ENCODE measurements at regions of chr4 and their contacts with region 1.

Region 1: GRCh38 chr4:16598243-16599206 is 299.9 kb downstream of the LDB2 start:
- DNase-seq: no peak
- H3K4me3 Mint-ChIP-seq: no peak overlapping the region
- H3K27ac Mint-ChIP-seq: no peak overlapping the region
- H3K4me1 Mint-ChIP-seq: no peaks in the 10 kb centered on the region
- H3K27me3 Mint-ChIP-seq: peaks cover 5% of the 10 kb centered on the region

Region 2: GRCh38 chr4:16582532-16582931 is 16.0 kb before region 1 on chr4:
- CTCF ChIA-PET with region 1: no interaction called
- intact Hi-C with region 1: loop called (anchors 1 kb)
- DNase-seq: no peak
- H3K4me3 Mint-ChIP-seq: no peak overlapping the region
- H3K27ac Mint-ChIP-seq: no peak overlapping the region
- H3K4me1 Mint-ChIP-seq: no peaks in the 10 kb centered on the region
- H3K27me3 Mint-ChIP-seq: no peaks in the 10 kb centered on the region